Breast epithelium (tissue), 4 donors: ENCODE measurements at regions of chr5 and their contacts with region 1.

Region 1: DNA sequence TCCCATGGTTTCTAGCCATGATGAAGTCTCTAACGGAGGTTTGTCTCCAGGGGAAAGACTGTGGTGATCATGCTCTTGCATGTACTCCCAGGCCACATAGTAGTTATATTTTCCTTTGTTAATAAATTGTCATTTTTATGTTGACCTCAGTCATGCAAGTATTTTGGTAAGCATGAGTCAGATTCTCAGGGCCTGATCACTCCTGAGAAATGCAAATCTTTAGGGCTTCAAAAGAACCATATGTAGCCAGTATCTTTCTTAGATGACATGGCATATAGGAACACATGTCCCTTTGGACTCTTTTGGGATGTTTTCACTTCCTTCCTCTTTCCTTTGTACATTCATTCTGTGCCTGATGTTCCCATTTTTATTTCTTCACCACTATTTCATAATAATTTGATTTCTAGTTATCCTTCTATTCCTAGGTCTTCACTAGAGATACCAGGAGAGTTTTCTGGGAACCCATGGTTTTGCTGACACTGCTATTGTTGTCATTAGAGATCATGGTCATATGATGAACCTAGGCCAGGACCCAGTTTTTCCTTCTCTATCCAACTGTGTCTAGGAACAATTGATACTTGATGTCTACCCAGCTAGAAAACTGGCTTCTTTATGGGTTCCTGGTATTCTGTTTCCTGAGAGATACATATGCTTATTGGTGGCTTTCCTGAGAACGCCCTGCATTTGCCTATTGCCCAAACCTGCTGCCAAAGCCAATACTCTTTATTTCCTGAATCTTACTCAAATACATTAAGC is 248.1 kb upstream of the NREP start:
- DNase-seq: no peak
- H3K4me3 ChIP-seq: no peak overlapping the region
- H3K27ac ChIP-seq: no peak overlapping the region
- H3K4me1 ChIP-seq: no peaks in the 10 kb centered on the region
- H3K27me3 ChIP-seq: no peaks in the 10 kb centered on the region
- CTCF ChIP-seq: no peak
- POLR2A ChIP-seq: no peak

Region 2: GRCh38 chr5:111223889-111224563 is 781.0 kb before region 1 on chr5 and contains the start of gene CAMK4:
- intact Hi-C with region 1: loop called (anchors 5 kb)
- DNase-seq: peak; percentile 19 to 51
- H3K4me3 ChIP-seq: peak within 1 kb of the TSS; percentile 48 to 81 (median 60)
- H3K27ac ChIP-seq: no peak within 1 kb of the TSS
- H3K4me1 ChIP-seq: no peaks in the 10 kb centered on the region
- H3K27me3 ChIP-seq: peaks cover 0 to 27% of the 10 kb centered on the region in 2 donors
- CTCF ChIP-seq: no peak
- POLR2A ChIP-seq: no peak
- total RNA-seq, gene CAMK4: 0.98 to 1.5 (median 1.4) TPM

Region 3: DNA sequence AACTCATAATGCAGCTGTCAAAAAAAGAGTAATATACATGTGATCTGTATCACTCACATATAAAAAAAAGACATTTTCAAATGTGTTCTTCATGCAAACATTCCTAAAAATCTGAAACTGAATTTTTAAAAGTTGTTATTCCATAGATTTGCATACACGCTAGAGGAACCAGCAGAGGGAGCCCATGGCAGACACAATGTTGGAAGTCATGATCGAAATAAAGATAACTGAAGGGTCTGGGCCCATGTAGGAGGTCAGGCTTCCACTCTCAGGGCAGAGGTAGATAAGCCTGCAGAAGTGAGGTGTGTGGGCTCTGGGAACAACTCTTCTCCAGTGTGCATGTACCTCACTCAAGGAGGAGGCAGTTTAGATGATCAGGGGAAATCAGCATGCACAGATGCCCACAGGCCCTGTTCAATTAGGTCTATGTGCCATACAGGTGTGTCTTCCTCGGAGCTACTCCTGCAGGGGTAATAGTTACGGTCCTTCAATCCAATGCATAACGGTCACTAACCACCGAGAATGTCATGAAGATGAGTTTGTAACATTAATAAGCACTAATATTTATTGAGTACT is 205.5 kb after region 1 on chr5:
- intact Hi-C with region 1: no loop called
- DNase-seq: no peak
- H3K4me3 ChIP-seq: no peak overlapping the region
- H3K27ac ChIP-seq: no peak overlapping the region
- H3K4me1 ChIP-seq: no peaks in the 10 kb centered on the region
- H3K27me3 ChIP-seq: no peaks in the 10 kb centered on the region
- CTCF ChIP-seq: peak in 2 of 3 donors; percentile 63 to 67
- POLR2A ChIP-seq: no peak